ENCODE measurements at regions of chr10 and their contacts with region 1.

Region 1: DNA sequence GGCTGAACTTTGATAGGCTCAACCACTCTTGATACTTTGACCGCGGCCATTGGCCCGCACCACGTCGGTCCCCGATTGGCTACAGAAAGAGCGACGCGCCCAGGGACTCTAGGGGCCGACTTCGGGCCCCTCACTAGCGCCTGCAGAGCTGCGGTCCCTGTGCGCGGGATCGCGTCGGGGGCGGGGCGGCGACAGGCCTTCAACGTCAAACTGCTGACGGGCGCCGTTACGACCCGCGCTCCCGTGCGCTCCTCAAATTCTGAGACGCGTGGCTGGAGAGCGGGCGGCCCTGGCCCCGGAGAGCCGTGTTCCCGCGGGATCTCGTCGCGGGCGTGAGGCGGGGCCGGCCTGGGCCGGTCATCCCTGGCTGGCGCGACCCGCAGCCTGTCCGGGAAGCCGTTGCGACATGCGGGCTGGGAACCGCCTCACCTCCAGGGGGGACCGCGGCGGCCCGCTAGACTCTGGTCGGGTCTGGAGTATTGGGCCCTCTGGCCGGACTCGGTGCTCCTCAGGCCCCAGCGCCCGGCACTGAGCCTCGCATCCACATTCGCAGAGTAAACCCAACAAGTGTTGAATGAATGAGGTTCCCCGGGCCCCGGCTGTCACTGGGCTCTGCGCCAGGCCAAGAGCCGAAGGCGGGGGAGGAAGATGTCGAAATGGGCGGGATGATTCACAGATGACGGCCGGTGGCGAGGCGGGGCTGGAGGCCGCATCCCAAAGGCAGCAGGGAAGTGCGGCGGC is 644 bp upstream of the SLC25A28 start:
- H3K4me3 Mint-ChIP-seq: peak overlapping the region; percentile 84
- H3K27ac Mint-ChIP-seq: peak overlapping the region; percentile 96
- H3K4me1 Mint-ChIP-seq: peaks cover 50% of the 10 kb centered on the region
- H3K27me3 Mint-ChIP-seq: no peaks in the 10 kb centered on the region

Region 2: GRCh38 chr10:99573790-99574189 is 47.1 kb before region 1 on chr10:
- intact Hi-C with region 1: no loop called
- H3K4me3 Mint-ChIP-seq: no peak overlapping the region
- H3K27ac Mint-ChIP-seq: no peak overlapping the region
- H3K4me1 Mint-ChIP-seq: no peaks in the 10 kb centered on the region
- H3K27me3 Mint-ChIP-seq: peaks cover 4% of the 10 kb centered on the region

Region 3: GRCh38 chr10:99659031-99659867 is 38.4 kb after region 1 on chr10 and contains the start of gene ENTPD7:
- intact Hi-C with region 1: loop called (anchors 1 kb)
- H3K4me3 Mint-ChIP-seq: peak within 1 kb of the TSS; percentile 90
- H3K27ac Mint-ChIP-seq: peak within 1 kb of the TSS; percentile 87
- H3K4me1 Mint-ChIP-seq: peaks cover 45% of the 10 kb centered on the region
- H3K27me3 Mint-ChIP-seq: no peaks in the 10 kb centered on the region

Region 4: GRCh38 chr10:99732033-99732912 is 111.4 kb after region 1 on chr10 and contains the starts of genes COX15 and CUTC:
- intact Hi-C with region 1: no loop called
- H3K4me3 Mint-ChIP-seq: peak within 1 kb of the TSS; percentile 90
- H3K27ac Mint-ChIP-seq: peak within 1 kb of the TSS; percentile 96
- H3K4me1 Mint-ChIP-seq: peaks cover 30% of the 10 kb centered on the region
- H3K27me3 Mint-ChIP-seq: no peaks in the 10 kb centered on the region

Region 5: DNA sequence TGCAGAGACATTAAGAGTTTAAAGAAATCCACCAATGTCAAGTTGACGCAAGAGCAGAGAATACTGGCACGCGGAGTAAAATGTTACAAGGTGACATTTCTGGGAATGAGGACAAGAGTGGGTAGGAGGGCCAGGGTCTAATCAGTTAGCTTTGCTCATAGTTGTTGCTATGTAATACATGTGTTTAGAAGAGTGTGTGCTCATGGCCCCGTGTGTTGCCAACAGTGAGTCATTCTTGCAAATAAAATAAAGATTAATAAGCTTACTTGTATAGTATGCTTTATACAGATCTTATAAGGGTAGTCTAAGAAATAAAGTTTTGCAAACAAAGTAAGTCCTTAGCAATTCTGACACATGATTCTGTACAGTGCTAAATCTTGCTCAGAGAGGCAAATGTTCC is 324.4 kb after region 1 on chr10:
- intact Hi-C with region 1: no loop called
- H3K4me3 Mint-ChIP-seq: no peak overlapping the region
- H3K27ac Mint-ChIP-seq: no peak overlapping the region
- H3K4me1 Mint-ChIP-seq: no peaks in the 10 kb centered on the region
- H3K27me3 Mint-ChIP-seq: no peaks in the 10 kb centered on the region

Measured in dendritic cell treated with granulocyte-macrophage colony-stimulating factor and Interleukin-4, amounts not matched to agents 40 ng/mL and 50 ng/mL, for 4 days (primary cell).